Heart right ventricle (tissue), 16 donors: ENCODE measurements at regions of chr2 and their contacts with region 1.

Region 1: GRCh38 chr2:39156107-39156506 is 35.3 kb upstream of the SOS1 start:
- DNase-seq: no peak
- ATAC-seq: no peak
- H3K4me3 ChIP-seq: no peak overlapping the region
- H3K27ac ChIP-seq: no peak overlapping the region
- H3K4me1 ChIP-seq: peaks cover 0 to 6% (median 0%) of the 10 kb centered on the region in 9 donors
- H3K27me3 ChIP-seq: no peaks in the 10 kb centered on the region
- CTCF ChIP-seq: no peak

Region 2: DNA sequence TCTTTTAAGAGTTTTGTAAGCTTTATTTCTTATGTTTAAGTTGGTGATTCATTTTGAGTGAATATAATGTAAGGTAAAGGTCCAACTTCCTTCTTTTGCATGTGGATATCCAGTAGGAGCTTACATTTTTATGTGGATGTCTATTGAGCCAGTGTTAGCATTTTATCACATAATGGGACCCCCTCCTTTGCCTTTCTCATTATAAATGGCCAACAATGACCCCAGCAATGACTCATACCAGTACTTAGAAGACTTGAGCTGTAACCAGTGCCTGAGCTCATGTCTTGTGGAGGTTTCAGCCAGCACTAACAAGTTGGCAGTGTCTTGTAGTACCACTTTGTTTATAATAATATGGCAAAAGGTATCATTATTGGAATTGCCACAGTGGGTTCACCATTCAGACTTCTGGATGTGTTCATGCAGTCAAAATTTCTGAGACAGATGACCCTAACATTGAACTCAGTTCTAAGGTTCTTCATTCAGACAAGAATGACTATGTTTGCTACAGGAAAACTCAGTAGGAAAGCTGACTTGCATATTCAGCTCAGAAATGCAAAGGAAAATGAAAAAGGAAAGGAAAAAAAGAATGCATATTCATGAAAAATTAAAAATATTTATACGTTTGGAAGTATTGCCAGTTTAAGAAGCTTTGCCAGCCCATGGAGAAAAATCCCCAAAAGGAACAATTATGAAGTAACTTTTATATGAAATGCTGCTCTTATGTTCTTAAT is 46.7 kb after region 1 on chr2:
- intact Hi-C with region 1: loop called in 1 of 10 experiments (anchors 10 kb)
- DNase-seq: no peak
- ATAC-seq: no peak
- H3K4me3 ChIP-seq: no peak overlapping the region
- H3K27ac ChIP-seq: no peak overlapping the region
- H3K4me1 ChIP-seq: no peaks in the 10 kb centered on the region
- H3K27me3 ChIP-seq: no peaks in the 10 kb centered on the region
- CTCF ChIP-seq: no peak